Calu3 (cell line): ENCODE measurements at regions of chr1 and their contacts with region 1.

Region 1: DNA sequence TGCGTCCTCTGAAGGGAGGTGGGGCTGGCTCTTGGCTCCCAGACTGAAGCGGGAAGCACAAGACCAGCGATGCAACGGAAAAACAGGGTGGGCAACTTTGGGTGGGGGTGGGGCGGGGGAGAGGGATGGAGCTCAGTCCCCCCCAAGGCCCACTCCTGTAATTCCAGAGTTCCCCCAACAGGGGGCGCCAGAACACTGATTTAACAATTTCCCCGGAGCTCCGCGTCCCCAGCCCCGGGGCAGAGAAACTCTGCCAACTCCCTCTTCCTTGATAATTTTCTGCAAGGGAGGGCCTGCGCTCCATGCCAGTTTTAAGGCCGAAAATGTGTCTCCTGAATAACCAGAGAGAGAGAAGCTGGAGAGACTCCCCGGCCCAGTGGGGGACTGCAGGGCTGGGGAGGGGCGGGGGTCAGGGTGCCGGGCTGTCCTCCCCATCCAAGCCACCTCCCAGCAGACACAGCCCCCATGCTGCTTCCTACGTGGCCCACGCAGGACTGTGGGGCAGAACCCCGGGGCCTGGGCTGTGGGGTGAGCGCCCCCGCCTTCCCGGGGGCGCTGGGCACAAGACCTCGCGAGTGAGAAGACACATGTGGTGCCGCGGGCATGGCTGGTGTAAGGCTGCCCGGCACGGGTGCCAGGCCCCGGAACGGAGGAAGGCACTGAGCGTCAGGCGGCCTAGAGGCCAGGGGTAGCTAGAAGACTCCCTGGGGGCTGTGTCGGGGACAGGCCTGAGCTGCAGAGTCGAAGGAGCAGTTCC is 51.4 kb downstream of the KIF21B start:
- DNase-seq: peak; percentile 81
- H3K4me3 Mint-ChIP-seq: no peak overlapping the region
- H3K27ac Mint-ChIP-seq: no peak overlapping the region
- H3K4me1 Mint-ChIP-seq: no peaks in the 10 kb centered on the region
- H3K27me3 Mint-ChIP-seq: no peaks in the 10 kb centered on the region
- CTCF ChIP-seq: peak; percentile 97

Region 2: GRCh38 chr1:200602632-200603031 is 369.5 kb before region 1 on chr1:
- CTCF ChIA-PET with region 1: no interaction called
- intact Hi-C with region 1: no loop called
- DNase-seq: no peak
- H3K4me3 Mint-ChIP-seq: no peak overlapping the region
- H3K27ac Mint-ChIP-seq: no peak overlapping the region
- H3K4me1 Mint-ChIP-seq: no peaks in the 10 kb centered on the region
- H3K27me3 Mint-ChIP-seq: no peaks in the 10 kb centered on the region
- CTCF ChIP-seq: no peak

Region 3: DNA sequence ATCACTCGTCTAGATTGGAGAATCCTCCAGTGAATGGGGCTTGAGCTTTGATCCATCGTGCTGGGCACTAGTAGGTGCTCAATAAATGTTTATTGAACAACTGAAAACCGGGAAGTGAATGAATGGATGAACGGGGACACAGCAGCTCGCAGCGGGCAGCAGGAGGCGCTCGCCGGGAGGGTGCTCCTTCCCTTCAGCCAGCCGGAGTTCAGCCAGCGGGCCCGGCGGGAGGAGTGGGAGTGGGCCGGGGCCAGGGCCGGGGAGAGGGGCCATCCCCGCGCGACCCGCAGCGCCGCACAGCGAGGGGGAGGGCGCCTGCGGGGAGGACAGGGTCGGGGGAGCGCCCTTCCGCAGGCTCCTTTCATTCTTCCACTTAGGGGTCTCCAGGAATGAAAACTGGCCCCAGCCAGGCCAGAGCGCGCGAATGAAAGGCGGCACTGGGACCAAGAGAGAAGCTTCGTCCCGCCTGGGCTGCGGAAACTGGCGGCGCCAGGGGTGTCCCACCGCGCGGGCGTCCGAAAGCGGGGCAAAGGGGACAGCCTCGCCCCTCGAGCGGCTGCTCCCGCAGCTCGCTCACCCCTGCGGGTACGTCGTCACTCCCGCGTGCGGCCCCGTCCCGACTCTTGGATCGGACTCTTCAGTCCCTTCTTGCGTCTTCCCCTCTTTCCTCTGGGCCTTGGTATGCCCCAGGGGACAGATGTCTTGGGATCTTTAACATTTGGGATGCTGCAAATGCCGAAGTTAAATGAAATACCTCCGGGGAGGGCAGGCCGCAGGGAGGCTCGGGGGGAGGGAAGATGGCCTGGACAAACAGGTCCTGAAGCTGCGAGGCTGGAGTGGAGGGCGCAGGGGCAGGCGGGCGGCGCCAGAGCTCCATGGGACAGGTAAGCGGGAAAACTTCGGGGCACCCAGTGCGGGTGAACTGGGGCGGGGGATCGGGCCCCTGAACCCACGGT is 81.0 kb before region 1 on chr1:
- CTCF ChIA-PET with region 1: interaction called, 5 read pairs
- intact Hi-C with region 1: loop called (anchors 5 kb)
- DNase-seq: peak; percentile 83
- H3K4me3 Mint-ChIP-seq: peak overlapping the region; percentile 99
- H3K27ac Mint-ChIP-seq: peak overlapping the region; percentile 89
- H3K4me1 Mint-ChIP-seq: peaks cover 65% of the 10 kb centered on the region
- H3K27me3 Mint-ChIP-seq: no peaks in the 10 kb centered on the region
- CTCF ChIP-seq: peak; percentile 65

Region 4: GRCh38 chr1:200938955-200939354 is 33.2 kb before region 1 on chr1:
- CTCF ChIA-PET with region 1: no interaction called
- intact Hi-C with region 1: no loop called
- DNase-seq: no peak
- H3K4me3 Mint-ChIP-seq: no peak overlapping the region
- H3K27ac Mint-ChIP-seq: no peak overlapping the region
- H3K4me1 Mint-ChIP-seq: no peaks in the 10 kb centered on the region
- H3K27me3 Mint-ChIP-seq: no peaks in the 10 kb centered on the region
- CTCF ChIP-seq: no peak

Region 5: GRCh38 chr1:201042779-201043461 is 70.8 kb after region 1 on chr1:
- CTCF ChIA-PET with region 1: interaction called, 45 read pairs
- intact Hi-C with region 1: loop called (anchors 1 kb)
- DNase-seq: peak; percentile 75
- H3K4me3 Mint-ChIP-seq: no peak overlapping the region
- H3K27ac Mint-ChIP-seq: no peak overlapping the region
- H3K4me1 Mint-ChIP-seq: no peaks in the 10 kb centered on the region
- H3K27me3 Mint-ChIP-seq: peaks cover 38% of the 10 kb centered on the region
- CTCF ChIP-seq: peak; percentile 90

Region 6: DNA sequence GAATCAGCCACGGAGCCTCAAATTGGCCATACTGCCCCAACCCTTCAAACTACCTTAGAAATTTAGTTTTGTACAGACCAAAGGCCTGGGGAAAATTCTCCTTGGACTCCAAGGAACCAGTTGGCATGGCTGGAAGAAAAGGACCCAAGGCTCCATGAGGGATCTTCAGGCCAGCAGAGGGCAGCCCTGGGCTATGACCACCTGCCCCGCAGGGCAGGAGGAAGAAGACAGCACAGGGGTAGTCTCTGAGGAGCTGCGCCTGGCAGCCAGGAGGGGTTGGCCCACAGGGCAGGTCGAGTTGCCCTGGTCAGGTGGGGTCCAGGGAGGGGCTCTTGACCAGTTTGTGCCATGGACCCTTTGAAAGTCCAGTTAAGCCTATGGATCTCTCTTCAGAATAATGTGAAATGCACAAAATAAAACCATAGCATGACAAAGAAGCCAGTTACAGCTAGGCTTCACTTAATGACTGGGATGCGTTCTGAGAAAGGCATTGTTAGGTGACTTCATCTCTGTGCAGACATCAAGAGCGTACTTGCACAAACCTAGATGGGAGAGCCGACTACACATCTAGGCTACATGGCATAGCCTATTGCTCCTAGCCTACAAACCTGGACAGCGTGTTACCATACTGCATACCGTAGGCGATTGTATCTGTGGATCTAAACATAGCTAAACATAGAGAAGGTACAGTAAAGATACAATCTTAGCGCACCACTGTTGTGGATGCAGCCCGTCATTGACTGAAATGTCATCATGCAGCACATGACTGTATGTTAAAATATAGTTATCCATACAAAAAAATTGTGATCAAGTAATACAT is 114.0 kb after region 1 on chr1:
- CTCF ChIA-PET with region 1: interaction called, 11 read pairs
- intact Hi-C with region 1: no loop called
- DNase-seq: peak; percentile 85
- H3K4me3 Mint-ChIP-seq: no peak overlapping the region
- H3K27ac Mint-ChIP-seq: no peak overlapping the region
- H3K4me1 Mint-ChIP-seq: no peaks in the 10 kb centered on the region
- H3K27me3 Mint-ChIP-seq: peaks cover 81% of the 10 kb centered on the region
- CTCF ChIP-seq: peak; percentile 67

Region 7: GRCh38 chr1:201114236-201115131 is 142.4 kb after region 1 on chr1:
- CTCF ChIA-PET with region 1: interaction called, 25 read pairs
- intact Hi-C with region 1: loop called (anchors 1 kb)
- DNase-seq: peak; percentile 95
- H3K4me3 Mint-ChIP-seq: peak overlapping the region; percentile 90
- H3K27ac Mint-ChIP-seq: peak overlapping the region; percentile 81
- H3K4me1 Mint-ChIP-seq: no peaks in the 10 kb centered on the region
- H3K27me3 Mint-ChIP-seq: peaks cover 80% of the 10 kb centered on the region
- CTCF ChIP-seq: peak; percentile 72

Region 8: DNA sequence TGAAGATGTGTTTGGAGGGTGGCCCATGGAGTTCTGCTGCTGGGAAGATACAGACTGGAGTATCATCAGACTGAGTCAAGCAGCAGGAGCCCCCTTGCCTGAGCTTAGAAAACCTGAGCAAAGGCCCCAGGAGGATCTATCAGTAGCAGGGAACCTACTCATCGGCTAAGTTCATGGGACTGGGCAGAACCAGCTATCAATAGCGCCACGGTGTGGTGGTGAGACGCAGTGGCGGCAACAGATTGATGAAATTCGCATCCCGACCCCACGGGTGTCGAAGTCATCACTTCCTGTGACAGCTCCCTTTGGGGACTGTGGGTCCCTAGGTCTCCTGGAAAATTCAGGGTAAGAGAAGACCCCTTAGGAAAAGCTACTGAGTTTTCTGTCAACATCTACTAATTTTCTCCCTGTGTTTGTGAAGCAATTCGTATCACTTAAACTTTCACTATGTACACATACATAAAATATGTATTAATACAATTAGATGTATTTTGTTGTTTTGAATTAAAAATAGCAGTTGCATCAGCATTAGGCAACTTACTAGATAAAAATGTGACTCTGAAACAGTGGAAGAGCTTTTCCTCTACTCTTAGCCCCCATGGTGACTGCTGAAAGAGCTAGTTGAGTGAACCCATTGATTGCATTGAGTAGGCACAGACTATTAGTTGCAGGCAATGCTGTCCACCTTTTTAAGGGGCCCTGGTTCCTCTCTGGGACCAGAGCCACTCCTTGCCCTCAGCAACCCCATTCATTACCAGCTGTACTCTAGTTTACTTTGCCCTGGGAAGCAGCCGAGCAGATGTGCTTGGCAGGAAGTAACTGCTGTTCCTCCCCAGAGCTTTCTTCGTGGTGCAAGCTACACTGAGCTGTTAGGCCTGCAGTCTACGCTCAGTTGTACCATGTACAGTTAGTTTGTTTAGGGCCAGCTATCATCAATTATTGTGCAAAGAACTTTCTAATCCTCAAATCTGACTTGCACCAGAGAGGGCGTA is 147.4 kb after region 1 on chr1:
- CTCF ChIA-PET with region 1: interaction called, 25 read pairs
- intact Hi-C with region 1: loop called (anchors 1 kb)
- DNase-seq: peak; percentile 60
- H3K4me3 Mint-ChIP-seq: no peak overlapping the region
- H3K27ac Mint-ChIP-seq: no peak overlapping the region
- H3K4me1 Mint-ChIP-seq: no peaks in the 10 kb centered on the region
- H3K27me3 Mint-ChIP-seq: peaks cover 88% of the 10 kb centered on the region
- CTCF ChIP-seq: peak; percentile 71